ENCODE measurements at regions of chr7 and their contacts with region 1.

Region 1: DNA sequence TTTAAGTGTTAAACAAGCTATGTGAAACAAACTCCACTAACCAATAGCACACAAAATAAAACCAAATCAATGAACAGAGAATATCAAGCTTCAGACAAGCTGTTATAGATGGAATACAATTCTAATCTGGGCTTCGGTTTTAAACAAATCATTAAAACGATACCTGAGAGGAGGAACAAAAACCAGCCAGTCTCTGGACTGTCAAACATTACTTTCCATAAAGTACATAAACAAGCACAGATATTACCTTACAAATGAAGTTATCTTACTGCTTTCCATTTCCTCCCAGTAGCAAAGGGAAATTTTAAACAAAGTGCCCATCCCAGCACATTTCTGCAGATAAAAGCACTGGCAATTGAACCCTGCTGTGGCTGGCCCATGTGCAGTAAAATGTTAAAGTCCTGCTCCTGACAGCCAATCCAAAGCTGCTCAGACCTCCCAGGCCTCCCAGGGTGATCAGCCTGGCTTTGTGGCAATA is 128.0 kb downstream of the NRCAM start:
- DNase-seq: no peak
- H3K4me3 ChIP-seq: peak overlapping the region in 1 of 2 experiments; percentile 21; a peak in 1 of 4 replicates
- H3K27ac ChIP-seq: peak overlapping the region in 1 of 2 experiments; percentile 89; a peak in 2 of 4 replicates
- H3K4me1 ChIP-seq: peaks cover 0 to 62% of the 10 kb centered on the region in 2 experiments; a peak in 2 of 4 replicates
- H3K27me3 ChIP-seq: no peaks in the 10 kb centered on the region
- CTCF ChIP-seq: no peak
- EP300 ChIP-seq: no peak
- RAD21 ChIP-seq: no peak

Region 2: GRCh38 chr7:108308903-108309302 is 19.3 kb before region 1 on chr7:
- CTCF ChIA-PET with region 1: interaction called, 13 read pairs
- POLR2A ChIA-PET with region 1: interaction called, 3 read pairs
- DNase-seq: no peak
- H3K4me3 ChIP-seq: no peak overlapping the region
- H3K27ac ChIP-seq: peak overlapping the region in 1 of 2 experiments; percentile 69; a peak in 2 of 4 replicates
- H3K4me1 ChIP-seq: peaks cover 19 to 31% of the 10 kb centered on the region in 2 experiments
- H3K27me3 ChIP-seq: no peaks in the 10 kb centered on the region
- CTCF ChIP-seq: no peak
- EP300 ChIP-seq: no peak
- RAD21 ChIP-seq: no peak

Measured in SK-N-SH (cell line).